GM18951 (cell line): ENCODE measurements at regions of chr16 and their contacts with region 1.

Region 1: DNA sequence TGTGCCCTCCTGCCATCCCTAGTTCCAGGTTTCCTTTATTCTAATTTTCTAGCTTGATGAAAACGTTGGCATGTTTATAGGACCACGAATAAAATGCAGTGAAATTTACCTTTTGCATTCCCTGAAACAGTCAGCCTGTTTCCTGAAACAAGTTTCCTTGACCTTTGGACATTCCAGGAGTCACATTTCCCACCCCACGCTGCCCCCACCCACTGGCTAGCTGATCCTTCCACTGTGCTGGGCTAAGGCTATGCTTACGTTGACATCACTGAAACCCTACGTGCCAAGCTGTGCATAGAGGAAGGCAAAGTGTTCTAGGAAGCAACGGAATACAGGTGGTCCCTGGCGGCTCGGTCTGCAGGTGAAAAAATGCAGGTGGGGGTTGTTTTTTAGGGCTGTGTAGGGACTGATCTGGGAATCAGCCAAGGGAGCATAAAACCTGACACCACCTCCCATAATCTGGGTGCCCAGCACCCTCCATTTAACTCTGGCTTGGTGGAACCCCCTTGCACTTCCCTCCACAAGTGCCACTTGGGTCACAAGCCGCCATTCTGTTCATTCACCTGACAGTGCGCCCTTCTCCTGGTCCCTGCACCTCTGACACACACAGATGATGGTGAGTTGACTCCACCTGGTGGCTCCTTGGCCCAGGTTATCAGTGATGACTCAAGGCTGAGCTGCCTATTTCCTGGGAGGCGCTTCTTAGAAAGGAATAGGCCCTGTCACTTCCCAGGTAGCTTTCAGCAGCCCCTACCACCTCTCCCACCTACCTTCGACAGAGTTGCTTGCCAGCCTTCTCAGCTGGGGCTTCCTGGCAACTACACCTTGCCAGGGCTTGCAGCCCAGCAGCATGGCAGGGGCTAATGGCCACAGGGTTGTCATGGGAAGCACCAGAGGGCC is 83.7 kb downstream of the N4BP1 start:
- POLR2A ChIP-seq: no peak

Region 2: GRCh38 chr16:48054881-48055601 is 471.3 kb before region 1 on chr16:
- in situ Hi-C with region 1: no loop called
- POLR2A ChIP-seq: no peak

Region 3: GRCh38 chr16:48353565-48354163 is 172.6 kb before region 1 on chr16:
- in situ Hi-C with region 1: loop called (anchors 10 kb)
- POLR2A ChIP-seq: no peak

Region 4: GRCh38 chr16:48462201-48462600 is 64.1 kb before region 1 on chr16:
- in situ Hi-C with region 1: no loop called
- POLR2A ChIP-seq: no peak